ENCODE measurements at regions of chr12 and their contacts with region 1.

Region 1: DNA sequence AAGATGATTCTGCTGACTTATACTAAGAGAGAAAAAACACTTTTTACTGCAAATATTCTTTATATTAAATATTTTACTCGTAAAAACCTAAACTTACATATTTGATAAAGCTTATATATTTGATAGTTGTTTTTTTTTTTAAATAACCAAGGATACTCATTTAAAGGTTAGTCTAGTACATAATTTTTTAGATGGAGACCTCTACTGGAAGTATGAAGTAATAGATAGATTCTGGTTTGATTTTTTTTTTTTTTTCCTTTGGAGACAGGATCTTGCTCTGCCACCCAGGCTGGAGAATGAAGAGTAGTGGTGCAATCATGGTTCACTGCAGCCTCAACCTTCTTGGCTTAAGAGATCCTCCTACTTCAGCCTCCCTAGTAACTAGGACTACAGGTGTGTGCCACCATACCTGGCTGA is 16.4 kb downstream of the ARID2 start:
- DNase-seq: peak in 2 of 9 experiments; percentile 31 to 53
- ATAC-seq: peak; percentile 80
- H3K4me3 ChIP-seq: no peak overlapping the region
- H3K4me3 Mint-ChIP-seq: no peak overlapping the region
- H3K27ac ChIP-seq: no peak overlapping the region
- H3K27ac Mint-ChIP-seq: no peak overlapping the region
- H3K4me1 ChIP-seq: peaks cover 6% of the 10 kb centered on the region
- H3K4me1 Mint-ChIP-seq: peaks cover 66% of the 10 kb centered on the region
- H3K27me3 ChIP-seq: no peaks in the 10 kb centered on the region
- H3K27me3 Mint-ChIP-seq: no peaks in the 10 kb centered on the region
- CTCF ChIP-seq: peak; percentile 57

Region 2: DNA sequence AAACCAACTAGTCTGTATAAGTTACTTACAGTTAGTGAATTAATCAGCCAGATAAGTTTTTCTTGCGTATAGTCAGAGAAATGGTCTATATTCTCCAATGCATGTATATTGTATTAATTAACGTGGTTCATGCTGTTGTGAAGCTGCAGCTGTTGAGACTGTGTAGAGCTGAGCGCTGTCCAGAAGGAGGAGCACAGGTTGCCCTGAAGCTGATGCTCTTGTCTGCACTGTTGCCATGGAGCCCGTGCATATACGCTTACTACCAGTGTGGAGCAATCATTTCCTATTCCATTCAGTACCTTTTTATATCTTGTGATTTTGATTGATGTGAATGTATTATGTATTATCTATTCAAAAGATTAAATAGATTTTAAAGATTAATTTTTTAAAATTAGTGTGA is 90.7 kb before region 1 on chr12:
- CTCF ChIA-PET with region 1: interaction called, 4 read pairs
- POLR2A ChIA-PET with region 1: no interaction called
- intact Hi-C with region 1: loop called (anchors 1 to 2 kb)
- DNase-seq: peak; percentile 28 to 86 (median 63)
- ATAC-seq: peak; percentile 100
- H3K4me3 ChIP-seq: no peak overlapping the region
- H3K4me3 Mint-ChIP-seq: no peak overlapping the region
- H3K27ac ChIP-seq: no peak overlapping the region
- H3K27ac Mint-ChIP-seq: no peak overlapping the region
- H3K4me1 ChIP-seq: no peaks in the 10 kb centered on the region
- H3K4me1 Mint-ChIP-seq: peaks cover 5% of the 10 kb centered on the region
- H3K27me3 ChIP-seq: peaks cover 0 to 2% of the 10 kb centered on the region in 2 experiments
- H3K27me3 Mint-ChIP-seq: no peaks in the 10 kb centered on the region
- CTCF ChIP-seq: peak; percentile 52

Region 3: DNA sequence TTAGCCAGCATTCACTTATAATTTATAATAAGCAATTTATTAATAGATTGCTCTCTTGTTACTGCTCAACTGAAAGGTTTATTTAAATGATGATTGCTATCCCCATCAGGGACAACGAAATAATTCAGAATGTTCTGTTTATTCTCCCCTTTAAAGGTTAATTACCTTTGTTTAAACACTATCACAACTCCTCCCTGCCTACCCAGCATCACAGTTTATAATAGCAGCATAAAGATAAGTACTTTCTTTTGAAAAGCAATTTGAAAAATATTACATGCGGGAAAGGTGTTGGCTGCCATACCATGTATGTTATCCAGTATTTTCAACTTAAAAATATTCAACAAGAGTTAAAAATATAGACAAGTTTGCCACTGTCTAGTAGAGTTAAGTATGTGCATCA is 213.9 kb after region 1 on chr12:
- CTCF ChIA-PET with region 1: no interaction called
- POLR2A ChIA-PET with region 1: no interaction called
- intact Hi-C with region 1: no loop called
- DNase-seq: no peak
- ATAC-seq: no peak
- H3K4me3 ChIP-seq: no peak overlapping the region
- H3K4me3 Mint-ChIP-seq: no peak overlapping the region
- H3K27ac ChIP-seq: no peak overlapping the region
- H3K27ac Mint-ChIP-seq: no peak overlapping the region
- H3K4me1 ChIP-seq: no peaks in the 10 kb centered on the region
- H3K4me1 Mint-ChIP-seq: peaks cover 42% of the 10 kb centered on the region
- H3K27me3 ChIP-seq: no peaks in the 10 kb centered on the region
- H3K27me3 Mint-ChIP-seq: no peaks in the 10 kb centered on the region
- CTCF ChIP-seq: no peak